AG04449 (cell line): ENCODE measurements at regions of chr14 and their contacts with region 1.

Region 1: GRCh38 chr14:74324931-74325361 is 22.2 kb upstream of the ABCD4 start:
- DNase-seq: no peak
- H3K4me3 ChIP-seq: no peak overlapping the region
- CTCF ChIP-seq: peak; percentile 60

Region 2: GRCh38 chr14:74314576-74314975 is 10.4 kb before region 1 on chr14:
- CTCF ChIA-PET with region 1: interaction called, 23 read pairs
- POLR2A ChIA-PET with region 1: no interaction called
- DNase-seq: no peak
- H3K4me3 ChIP-seq: no peak overlapping the region
- CTCF ChIP-seq: no peak